ENCODE measurements at regions of chr1 and their contacts with region 1.

Region 1: DNA sequence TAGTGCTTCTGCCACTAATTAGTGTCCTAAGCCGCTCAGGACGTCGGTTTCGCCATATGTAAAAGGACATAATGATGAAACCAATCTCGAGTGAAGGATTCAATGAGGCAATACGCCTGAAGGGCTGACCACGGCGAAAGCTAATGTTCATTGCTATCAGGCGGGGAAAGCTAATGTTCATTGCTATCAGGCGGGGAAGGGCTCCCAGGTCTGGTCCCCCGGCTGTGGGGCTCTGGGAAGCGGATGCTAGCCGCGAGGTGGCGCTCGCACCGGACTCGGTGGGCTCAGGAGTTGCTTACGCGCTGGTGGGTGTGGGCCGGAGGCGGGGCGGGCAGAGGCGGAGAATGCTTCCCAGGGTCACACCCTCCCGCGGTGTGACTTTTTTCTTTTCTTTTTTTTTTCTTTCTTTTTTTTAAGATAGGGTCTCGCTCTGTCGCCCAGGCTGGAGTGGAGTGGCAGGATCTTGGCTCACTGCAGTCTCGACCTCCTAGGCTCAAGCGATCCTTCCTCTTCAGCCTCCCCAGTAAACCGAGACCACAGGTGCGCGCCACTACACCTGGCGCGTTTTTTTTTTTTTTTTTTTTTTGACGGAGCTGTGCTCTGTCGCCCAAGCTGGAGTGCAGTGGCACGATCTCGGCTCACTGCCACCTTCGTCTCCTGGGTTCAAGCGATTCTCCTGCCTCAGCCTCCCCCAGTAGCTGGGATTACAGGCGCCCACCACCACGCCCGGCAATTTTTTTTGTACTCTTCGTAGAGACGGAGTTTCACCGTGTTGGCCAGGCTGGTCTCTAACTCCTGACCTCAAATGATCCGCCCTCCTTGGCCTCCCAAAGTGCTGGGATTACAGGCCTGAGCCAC is 1.1 kb upstream of the PEAR1 start:
- DNase-seq: peak; percentile 94
- ATAC-seq: peak; percentile 89

Region 2: GRCh38 chr1:156689035-156689952 is 203.1 kb before region 1 on chr1:
- intact Hi-C with region 1: loop called (anchors 5 kb)
- DNase-seq: peak; percentile 79
- ATAC-seq: peak; percentile 87

Region 3: GRCh38 chr1:156804572-156805243 is 87.7 kb before region 1 on chr1:
- intact Hi-C with region 1: loop called (anchors 5 kb)
- DNase-seq: no peak
- ATAC-seq: no peak

Region 4: GRCh38 chr1:156838981-156839410 is 53.4 kb before region 1 on chr1:
- intact Hi-C with region 1: loop called (anchors 2 kb)
- DNase-seq: no peak
- ATAC-seq: no peak

Region 5: DNA sequence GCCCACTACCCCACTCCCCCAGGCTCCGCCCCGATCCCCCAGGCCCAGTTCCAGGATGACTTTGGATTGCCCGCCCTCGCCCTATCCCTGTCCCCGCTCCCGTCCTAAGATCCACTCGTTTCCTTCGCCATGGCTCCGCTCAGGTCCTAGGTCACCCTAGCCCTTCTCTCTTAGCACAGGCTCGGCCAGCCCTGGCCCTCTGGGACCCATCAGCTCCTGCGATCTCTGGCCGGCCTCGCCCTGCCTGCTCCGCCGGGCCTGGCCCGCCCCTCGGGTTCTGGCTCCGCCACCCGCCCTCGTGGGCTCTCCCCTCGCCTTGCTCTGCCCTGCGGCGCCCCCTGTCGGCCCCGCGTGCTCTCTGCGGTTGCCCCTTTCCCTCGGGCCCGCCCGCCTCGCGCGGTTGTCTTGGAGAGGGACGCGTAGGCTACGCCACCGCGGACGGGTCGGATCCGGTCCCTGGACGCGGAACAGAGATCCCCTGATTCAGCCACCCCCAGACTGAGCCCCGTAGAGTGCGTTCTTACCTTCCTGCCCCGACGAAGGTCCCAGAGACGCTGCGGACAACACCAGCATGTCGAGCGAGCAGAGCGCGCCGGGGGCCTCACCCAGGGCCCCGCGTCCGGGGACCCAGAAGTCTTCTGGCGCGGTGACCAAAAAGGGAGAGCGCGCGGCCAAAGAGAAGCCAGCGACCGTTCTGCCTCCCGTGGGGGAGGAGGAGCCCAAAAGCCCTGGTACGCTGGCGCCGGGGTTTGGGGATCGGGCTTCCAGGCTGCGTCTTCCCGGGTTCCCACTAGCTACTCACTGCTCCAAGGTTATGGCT is 28.0 kb after region 1 on chr1 and contains the start of gene LRRC71:
- intact Hi-C with region 1: loop called (anchors 1 kb)
- DNase-seq: peak; percentile 91
- ATAC-seq: peak; percentile 95
- total RNA-seq, gene LRRC71: not detected

Region 6: GRCh38 chr1:157073944-157074767 is 181.7 kb after region 1 on chr1:
- intact Hi-C with region 1: loop called (anchors 10 kb)
- DNase-seq: peak; percentile 87
- ATAC-seq: peak; percentile 46

Region 7: DNA sequence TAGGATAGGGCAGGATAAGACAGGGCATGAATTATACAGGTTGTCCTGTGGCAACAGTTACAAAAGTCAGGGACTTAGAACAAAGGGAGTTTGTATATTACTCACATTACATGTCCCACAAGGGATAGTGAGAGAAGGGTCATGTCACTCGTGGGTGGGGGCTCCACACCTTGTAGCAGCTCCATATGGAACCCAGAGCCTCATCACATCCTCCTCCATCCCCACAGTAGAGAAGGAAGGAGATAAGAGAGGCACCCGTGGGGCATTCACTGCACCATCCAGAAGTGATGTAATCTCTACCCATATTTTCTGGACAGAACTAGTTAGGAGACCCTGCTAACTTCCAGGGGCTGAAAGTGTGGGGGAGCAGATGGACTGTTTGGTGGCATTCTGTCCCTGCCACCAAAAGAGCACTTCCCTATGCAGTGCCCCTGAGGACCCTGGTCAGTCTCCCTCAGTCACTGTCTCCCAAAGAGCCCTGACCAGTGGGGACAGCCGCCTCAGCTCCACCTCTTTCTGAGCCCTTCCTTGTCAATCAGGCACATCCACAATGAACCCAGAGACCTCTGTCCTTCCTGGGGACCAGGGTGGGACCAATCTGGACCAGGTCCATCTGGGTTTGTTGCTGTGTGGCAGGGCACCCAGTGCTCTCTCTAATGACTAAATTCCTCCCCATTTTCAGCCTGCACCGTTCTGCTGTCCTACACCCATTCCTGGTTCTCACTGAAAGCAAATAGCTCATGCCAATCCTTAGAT is 400.6 kb after region 1 on chr1:
- intact Hi-C with region 1: no loop called
- DNase-seq: no peak
- ATAC-seq: no peak

Region 8: GRCh38 chr1:157348538-157349480 is 456.4 kb after region 1 on chr1:
- intact Hi-C with region 1: no loop called
- DNase-seq: no peak
- ATAC-seq: no peak